Cardiac septum (tissue), 1 donor: ENCODE measurements at regions of chr2 and their contacts with region 1.

Region 1: GRCh38 chr2:179545024-179545423 is 280.4 kb upstream of the SESTD1 start:
- DNase-seq: no peak

Region 2: DNA sequence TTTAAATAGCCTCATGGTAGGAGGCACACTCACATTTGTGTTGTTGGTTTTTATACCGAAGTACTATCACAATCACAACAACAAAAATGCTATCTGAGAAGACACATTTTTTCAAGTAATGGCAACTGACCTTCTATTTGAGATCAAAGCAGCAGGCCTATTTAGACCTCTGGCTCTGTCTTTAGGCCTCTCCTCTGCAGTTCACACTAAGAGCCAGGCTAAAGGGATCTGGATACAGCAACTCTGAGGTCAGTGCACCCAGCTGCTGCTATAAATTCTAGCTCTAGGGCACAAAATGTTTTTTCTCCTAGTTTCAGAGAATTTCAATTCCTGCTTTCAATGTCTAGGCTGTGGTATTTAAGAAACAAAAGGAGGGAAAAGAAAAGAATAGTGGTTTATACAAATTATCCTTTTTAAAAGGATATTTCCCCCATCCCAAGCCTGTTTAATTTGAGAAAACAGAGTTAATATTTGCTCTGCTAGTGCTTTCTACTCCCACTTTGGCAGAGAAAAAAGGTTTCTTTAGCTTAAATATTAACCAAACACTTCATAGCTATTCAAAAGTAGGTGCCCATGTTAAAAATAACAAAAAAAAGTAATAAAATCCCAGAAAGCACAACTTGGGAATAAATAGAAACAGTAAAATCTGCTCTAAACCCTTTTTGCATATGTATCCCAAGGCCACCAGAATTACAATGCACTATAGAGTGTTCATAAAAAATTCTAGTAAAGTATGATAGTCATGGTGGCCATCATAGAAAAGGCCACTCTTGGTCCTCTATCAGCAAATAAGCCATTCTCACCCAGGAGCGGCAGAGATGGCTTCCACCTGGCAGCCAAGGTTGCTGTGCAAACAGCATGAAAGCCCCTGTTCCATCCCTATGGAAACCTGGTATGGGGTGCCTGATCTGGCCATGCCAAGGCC is 13.2 kb after region 1 on chr2:
- intact Hi-C with region 1: loop called (anchors 2 kb)
- DNase-seq: no peak